ENCODE measurements at regions of chr21 and their contacts with region 1.

Region 1: DNA sequence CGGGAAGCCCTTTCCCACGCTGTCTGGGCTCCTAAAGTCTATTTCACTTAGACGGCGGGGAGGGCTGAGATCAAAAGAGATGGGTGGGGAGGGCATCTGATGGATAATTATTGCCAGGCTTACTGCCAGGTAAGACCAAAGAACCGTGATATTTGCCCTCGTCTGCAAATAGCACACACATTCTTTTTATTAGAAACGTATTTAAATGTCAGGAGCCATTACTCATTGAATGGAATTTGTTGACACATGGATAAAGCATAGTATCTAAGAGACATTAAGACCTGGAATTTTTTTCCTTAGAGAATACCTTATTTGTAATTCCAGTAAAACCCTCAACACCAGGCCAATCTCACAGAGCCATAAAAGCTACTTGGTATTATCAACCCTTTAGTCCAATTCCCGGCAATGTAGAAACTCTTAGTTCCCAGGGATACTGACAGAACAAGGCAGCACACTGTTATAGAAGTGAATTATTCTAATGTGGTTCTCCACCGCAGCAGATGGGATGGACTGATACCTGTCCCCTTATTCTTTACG is 10.6 kb downstream of the URB1 start:
- DNase-seq: no peak
- H3K4me3 ChIP-seq: no peak overlapping the region
- H3K27ac ChIP-seq: no peak overlapping the region
- H3K4me1 ChIP-seq: peaks cover 0 to 2% (median 0%) of the 10 kb centered on the region in 4 experiments; a peak in 1 of 7 replicates
- H3K27me3 ChIP-seq: no peaks in the 10 kb centered on the region
- CTCF ChIP-seq: no peak
- EP300 ChIP-seq: no peak
- POLR2A ChIP-seq: no peak
- RAD21 ChIP-seq: no peak

Region 2: GRCh38 chr21:32578107-32578692 is 196.0 kb after region 1 on chr21:
- CTCF ChIA-PET with region 1: interaction called, 19 read pairs
- POLR2A ChIA-PET with region 1: no interaction called
- DNase-seq: peak; percentile 23 to 70
- H3K4me3 ChIP-seq: no peak overlapping the region
- H3K27ac ChIP-seq: no peak overlapping the region
- H3K4me1 ChIP-seq: no peaks in the 10 kb centered on the region
- H3K27me3 ChIP-seq: no peaks in the 10 kb centered on the region
- CTCF ChIP-seq: peak; percentile 75 to 94 (median 79)
- EP300 ChIP-seq: no peak
- POLR2A ChIP-seq: no peak
- RAD21 ChIP-seq: peak; percentile 79 to 84